Mammary epithelial cell (primary cell): ENCODE measurements at regions of chr10 and their contacts with region 1.

Region 1: GRCh38 chr10:48958598-48959190 is 19.1 kb upstream of the LRRC18 start:
- DNase-seq: no peak
- H3K4me3 ChIP-seq: no peak overlapping the region
- H3K27ac ChIP-seq: no peak overlapping the region
- H3K4me1 ChIP-seq: no peaks in the 10 kb centered on the region
- H3K27me3 ChIP-seq: peaks cover 8% of the 10 kb centered on the region
- CTCF ChIP-seq: no peak

Region 2: GRCh38 chr10:47421057-47421952 is 1537.4 kb before region 1 on chr10:
- CTCF ChIA-PET with region 1: no interaction called
- dilution Hi-C with region 1: no loop called
- in situ Hi-C with region 1: no loop called
- intact Hi-C with region 1: no loop called
- DNase-seq: peak; percentile 74
- H3K4me3 ChIP-seq: no peak overlapping the region
- H3K27ac ChIP-seq: no peak overlapping the region
- H3K4me1 ChIP-seq: no peaks in the 10 kb centered on the region
- H3K27me3 ChIP-seq: no peaks in the 10 kb centered on the region
- CTCF ChIP-seq: no peak

Region 3: GRCh38 chr10:48885383-48885782 is 73.3 kb before region 1 on chr10:
- CTCF ChIA-PET with region 1: no interaction called
- dilution Hi-C with region 1: no loop called
- in situ Hi-C with region 1: no loop called
- intact Hi-C with region 1: no loop called
- DNase-seq: no peak
- H3K4me3 ChIP-seq: no peak overlapping the region
- H3K27ac ChIP-seq: no peak overlapping the region
- H3K4me1 ChIP-seq: no peaks in the 10 kb centered on the region
- H3K27me3 ChIP-seq: no peaks in the 10 kb centered on the region
- CTCF ChIP-seq: peak; percentile 37 to 51

Region 4: DNA sequence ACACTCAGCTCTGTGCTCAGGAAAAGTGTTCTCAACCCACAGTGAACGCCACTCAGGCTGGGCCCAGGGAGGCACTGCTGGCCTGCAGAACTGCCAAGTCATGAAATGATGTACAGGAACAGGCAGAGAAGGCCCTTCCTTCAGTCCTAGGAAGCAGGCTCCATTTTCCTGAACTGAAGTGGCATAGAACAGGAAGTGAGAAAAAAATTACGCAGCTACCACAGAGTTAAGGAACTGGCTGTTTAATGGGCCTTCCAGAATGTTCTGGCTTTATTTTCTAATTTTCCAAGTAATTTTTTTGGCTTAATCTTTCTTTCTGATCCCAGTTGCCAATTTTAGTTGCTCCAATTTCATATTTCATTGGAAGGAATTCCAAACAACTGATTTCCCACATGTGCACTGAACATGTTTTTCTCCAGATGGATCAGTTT is 58.3 kb before region 1 on chr10:
- CTCF ChIA-PET with region 1: no interaction called
- dilution Hi-C with region 1: no loop called
- in situ Hi-C with region 1: no loop called
- intact Hi-C with region 1: loop called (anchors 10 kb)
- DNase-seq: no peak
- H3K4me3 ChIP-seq: no peak overlapping the region
- H3K27ac ChIP-seq: no peak overlapping the region
- H3K4me1 ChIP-seq: no peaks in the 10 kb centered on the region
- H3K27me3 ChIP-seq: no peaks in the 10 kb centered on the region
- CTCF ChIP-seq: no peak

Region 5: DNA sequence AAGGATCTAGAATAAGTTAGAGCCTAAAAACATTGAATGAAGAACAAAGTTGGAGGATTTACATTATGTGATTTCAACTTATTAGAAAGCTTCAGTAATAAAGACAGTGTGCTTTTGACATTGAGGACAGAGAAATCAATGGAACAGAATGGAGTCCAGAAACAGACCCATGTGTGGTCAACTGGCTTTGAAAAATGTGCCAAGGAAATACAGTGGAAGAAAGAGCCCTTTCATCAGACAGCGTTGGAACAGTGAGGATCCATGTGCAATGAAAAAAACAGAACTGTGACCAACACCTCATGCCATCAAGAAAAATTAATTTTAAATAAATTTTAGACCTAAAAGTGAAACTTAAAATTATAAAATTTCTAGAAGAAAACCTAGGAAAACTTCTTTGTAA is 31.5 kb after region 1 on chr10:
- CTCF ChIA-PET with region 1: no interaction called
- dilution Hi-C with region 1: loop called (anchors 5 kb)
- in situ Hi-C with region 1: no loop called
- intact Hi-C with region 1: no loop called
- DNase-seq: no peak
- H3K4me3 ChIP-seq: no peak overlapping the region
- H3K27ac ChIP-seq: no peak overlapping the region
- H3K4me1 ChIP-seq: no peaks in the 10 kb centered on the region
- H3K27me3 ChIP-seq: peaks cover 2% of the 10 kb centered on the region
- CTCF ChIP-seq: no peak